Breast epithelium (tissue), 4 donors: ENCODE measurements at regions of chr4 and their contacts with region 1.

Region 1: GRCh38 chr4:92299152-92299551 is 4.6 kb upstream of the GRID2 start:
- DNase-seq: no peak
- H3K4me3 ChIP-seq: no peak overlapping the region
- H3K27ac ChIP-seq: no peak overlapping the region
- H3K4me1 ChIP-seq: no peaks in the 10 kb centered on the region
- H3K27me3 ChIP-seq: peaks cover 0 to 43% of the 10 kb centered on the region in 2 donors
- CTCF ChIP-seq: no peak
- POLR2A ChIP-seq: no peak

Region 2: DNA sequence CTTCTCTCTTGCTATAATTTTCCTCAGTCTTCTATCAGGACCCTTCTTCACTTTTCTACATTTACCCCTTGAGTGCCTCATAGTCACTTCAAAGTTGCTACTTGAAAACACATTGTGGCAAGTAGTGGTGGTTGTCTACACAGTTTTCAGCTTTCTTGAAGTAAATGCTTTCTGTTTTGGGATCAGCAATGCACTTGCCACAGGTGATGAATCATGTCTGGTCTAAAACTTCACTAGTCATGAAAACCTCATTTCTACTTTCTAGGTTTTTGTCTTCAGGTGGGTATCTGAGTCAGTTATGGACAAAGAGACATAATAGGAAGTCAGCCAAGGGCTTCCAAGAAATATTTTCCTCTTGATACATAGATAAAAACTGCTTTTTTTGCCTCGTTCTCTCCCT is 1812.8 kb before region 1 on chr4:
- intact Hi-C with region 1: loop called (anchors 5 kb)
- DNase-seq: no peak
- H3K4me3 ChIP-seq: no peak overlapping the region
- H3K27ac ChIP-seq: no peak overlapping the region
- H3K4me1 ChIP-seq: no peaks in the 10 kb centered on the region
- H3K27me3 ChIP-seq: no peaks in the 10 kb centered on the region
- CTCF ChIP-seq: no peak
- POLR2A ChIP-seq: no peak

Region 3: DNA sequence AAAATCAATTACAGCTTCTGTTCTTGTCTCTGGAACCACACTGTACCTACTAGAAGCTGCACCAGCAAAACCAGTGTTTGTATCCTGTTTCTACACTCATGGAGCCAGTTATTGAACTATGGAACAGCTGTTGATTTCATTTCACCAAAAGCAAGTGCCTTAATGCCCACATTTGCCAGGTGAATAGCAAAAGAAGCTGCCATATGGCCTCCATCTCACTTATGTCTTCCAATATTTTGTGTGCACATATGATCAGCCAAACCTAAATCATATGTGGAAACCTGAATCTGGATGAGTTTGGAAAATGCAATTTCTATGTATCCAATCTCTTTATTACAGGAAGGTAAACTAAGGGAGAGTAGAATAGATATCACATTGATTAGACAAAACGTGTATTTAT is 411.2 kb before region 1 on chr4:
- intact Hi-C with region 1: no loop called
- DNase-seq: no peak
- H3K4me3 ChIP-seq: no peak overlapping the region
- H3K27ac ChIP-seq: no peak overlapping the region
- H3K4me1 ChIP-seq: no peaks in the 10 kb centered on the region
- H3K27me3 ChIP-seq: no peaks in the 10 kb centered on the region
- CTCF ChIP-seq: no peak
- POLR2A ChIP-seq: no peak

Region 4: DNA sequence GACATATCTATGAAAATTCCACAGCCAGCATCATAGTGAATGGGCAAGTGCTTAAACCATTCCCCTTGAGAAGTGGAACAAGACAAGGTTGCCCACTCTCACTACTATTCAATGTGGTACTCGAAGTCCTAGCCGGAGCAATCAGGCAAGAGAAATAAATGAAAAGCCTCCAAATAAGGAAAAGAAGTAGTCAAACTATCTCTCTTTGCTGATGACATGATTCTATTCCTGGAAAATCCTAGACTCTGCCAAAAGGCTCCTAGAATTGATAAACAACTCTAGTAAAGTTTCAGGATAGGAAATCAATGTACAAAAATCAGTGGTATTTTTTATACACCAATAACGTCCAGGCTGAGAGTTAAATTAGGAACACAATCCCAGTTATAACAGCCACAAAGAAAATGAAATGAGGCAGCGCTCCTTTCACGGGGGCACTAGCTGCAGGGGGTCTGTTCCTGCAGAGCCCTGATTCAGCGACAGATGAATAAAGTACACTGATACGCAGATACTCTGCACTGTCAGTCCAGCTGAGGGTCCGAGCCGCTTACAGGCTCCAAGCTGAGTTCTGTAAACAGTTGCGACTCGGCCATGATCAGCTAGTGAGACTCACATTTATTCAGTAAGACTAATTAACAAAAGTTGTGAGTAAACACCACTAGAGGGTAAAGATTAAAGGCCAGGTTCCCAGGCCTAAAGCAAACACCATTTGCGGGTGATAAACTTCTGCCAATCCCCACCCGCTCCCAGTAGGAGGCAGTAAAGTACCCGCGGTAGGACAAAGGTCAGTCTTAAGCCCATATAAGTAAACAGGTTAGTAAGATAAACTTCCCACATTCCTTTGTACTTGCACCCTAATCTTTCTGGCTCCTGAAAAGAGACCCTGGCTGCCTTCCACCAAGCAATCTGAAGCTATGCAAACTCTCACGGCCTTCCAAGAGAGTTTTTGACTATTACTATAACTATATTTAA is 286.0 kb before region 1 on chr4:
- intact Hi-C with region 1: no loop called
- DNase-seq: no peak
- H3K4me3 ChIP-seq: no peak overlapping the region
- H3K27ac ChIP-seq: no peak overlapping the region
- H3K4me1 ChIP-seq: no peaks in the 10 kb centered on the region
- H3K27me3 ChIP-seq: no peaks in the 10 kb centered on the region
- CTCF ChIP-seq: no peak
- POLR2A ChIP-seq: no peak